Ovary (tissue), 10 donors: ENCODE measurements at regions of chr18 and their contacts with region 1.

Region 1: DNA sequence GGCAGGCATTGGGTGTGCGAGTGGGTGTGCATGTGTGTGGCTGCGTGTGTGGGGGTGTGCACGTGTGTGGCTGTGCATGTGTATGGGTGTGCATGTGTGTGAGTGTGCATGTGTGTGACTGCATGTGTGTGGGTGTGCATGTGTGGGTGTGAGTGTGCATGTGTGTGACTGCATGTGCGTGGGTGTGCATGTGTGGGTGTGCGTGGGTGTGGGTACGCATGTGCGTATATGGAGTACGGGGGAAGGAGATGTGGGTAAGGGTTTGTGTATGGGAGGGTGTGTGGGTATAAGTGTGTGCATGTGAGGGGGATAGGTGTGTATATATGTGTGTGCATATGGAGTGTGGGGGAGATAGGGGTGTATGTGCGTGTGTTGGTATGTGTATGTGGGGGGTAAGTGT is 136.4 kb downstream of the FAM210A start:
- DNase-seq: no peak
- H3K4me3 ChIP-seq: no peak overlapping the region
- H3K27ac ChIP-seq: no peak overlapping the region
- H3K4me1 ChIP-seq: no peaks in the 10 kb centered on the region
- H3K27me3 ChIP-seq: no peaks in the 10 kb centered on the region
- CTCF ChIP-seq: no peak
- EP300 ChIP-seq: no peak
- POLR2A ChIP-seq: no peak

Region 2: DNA sequence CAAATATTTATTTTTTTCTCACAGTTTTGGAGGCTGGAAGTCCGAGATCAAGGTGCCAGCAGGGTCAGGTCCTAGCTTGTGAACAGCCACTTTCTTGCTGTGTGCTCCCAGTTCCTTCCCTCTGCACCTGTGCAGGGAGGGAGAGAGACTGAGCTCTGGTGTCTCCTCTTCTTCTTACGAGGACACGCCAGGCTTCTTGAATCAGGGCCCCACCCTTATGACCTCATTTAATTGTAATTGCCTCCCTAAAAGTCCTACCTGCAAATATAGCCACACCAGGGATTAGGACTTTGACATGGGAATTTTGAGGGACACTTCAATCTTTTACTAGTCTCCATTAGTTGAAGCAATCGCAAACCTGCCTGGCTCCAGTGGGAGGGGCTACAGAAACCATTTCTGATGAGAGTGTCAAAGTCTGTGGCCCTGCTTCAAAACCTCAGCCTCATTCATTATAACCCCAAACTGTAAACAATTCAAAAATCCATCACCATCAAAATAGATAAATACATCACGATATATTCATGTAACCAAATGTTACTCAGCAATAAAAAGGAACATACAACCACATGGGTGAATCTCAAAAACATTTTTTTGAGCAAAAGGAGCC is 660.4 kb before region 1 on chr18:
- intact Hi-C with region 1: no loop called
- DNase-seq: no peak
- H3K4me3 ChIP-seq: no peak overlapping the region
- H3K27ac ChIP-seq: no peak overlapping the region
- H3K4me1 ChIP-seq: peaks cover 1% of the 10 kb centered on the region
- H3K27me3 ChIP-seq: no peaks in the 10 kb centered on the region
- CTCF ChIP-seq: no peak
- EP300 ChIP-seq: no peak
- POLR2A ChIP-seq: no peak

Region 3: GRCh38 chr18:13558124-13558523 is 31.8 kb before region 1 on chr18:
- intact Hi-C with region 1: loop called in 1 of 4 experiments (anchors 1 kb)
- DNase-seq: no peak
- H3K4me3 ChIP-seq: no peak overlapping the region
- H3K27ac ChIP-seq: no peak overlapping the region
- H3K4me1 ChIP-seq: no peaks in the 10 kb centered on the region
- H3K27me3 ChIP-seq: no peaks in the 10 kb centered on the region
- CTCF ChIP-seq: no peak
- EP300 ChIP-seq: no peak
- POLR2A ChIP-seq: no peak